Esophagus muscularis mucosa (tissue), 4 donors: ENCODE measurements at regions of chr15 and their contacts with region 1.

Region 1: DNA sequence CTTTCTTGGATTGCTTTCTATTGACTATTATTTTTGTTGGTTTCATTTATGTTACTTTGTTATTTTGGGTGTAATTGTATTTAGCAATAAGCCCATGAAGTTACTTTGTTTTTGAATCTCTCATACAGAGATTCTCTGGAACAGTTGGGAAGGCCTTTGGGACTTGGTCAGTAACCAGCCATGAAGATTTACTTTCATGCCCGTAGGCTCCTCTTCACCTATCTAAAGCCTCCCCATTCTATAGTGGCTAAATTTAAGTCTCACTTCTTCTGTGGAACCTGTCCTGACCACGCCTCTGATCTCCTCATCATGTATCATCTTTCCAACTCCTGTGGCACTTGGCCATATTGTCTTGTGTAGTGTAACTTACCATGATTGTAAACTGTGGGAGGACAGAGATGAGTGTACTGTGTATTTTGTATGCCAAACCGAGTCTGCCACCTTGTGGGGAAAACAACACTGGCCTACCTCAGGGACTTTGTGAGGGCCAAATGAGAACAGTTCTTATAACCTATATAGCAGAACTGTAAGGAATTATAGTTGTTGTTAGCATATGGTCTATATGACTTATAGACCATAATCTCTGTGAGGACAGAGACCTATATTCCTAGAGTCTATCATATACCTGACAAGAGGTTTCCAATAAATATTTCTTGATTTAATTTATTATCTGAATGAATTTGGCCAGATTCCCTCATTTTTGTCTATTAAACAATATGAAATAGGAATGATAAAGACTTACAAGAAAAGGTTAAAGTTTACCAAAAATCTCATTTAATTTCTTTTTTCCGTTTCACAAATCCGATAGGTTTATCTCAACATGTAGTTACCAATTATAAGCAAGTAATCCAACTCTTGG is 75.0 kb downstream of the STARD9 start:
- DNase-seq: no peak
- H3K4me3 ChIP-seq: no peak overlapping the region
- H3K27ac ChIP-seq: peak overlapping the region in 1 of 4 donors; percentile 42
- H3K4me1 ChIP-seq: peaks cover 0 to 9% (median 0%) of the 10 kb centered on the region in 4 donors
- H3K27me3 ChIP-seq: no peaks in the 10 kb centered on the region
- CTCF ChIP-seq: peak; percentile 65 to 86 (median 78)
- EP300 ChIP-seq: no peak
- POLR2A ChIP-seq: no peak

Region 2: DNA sequence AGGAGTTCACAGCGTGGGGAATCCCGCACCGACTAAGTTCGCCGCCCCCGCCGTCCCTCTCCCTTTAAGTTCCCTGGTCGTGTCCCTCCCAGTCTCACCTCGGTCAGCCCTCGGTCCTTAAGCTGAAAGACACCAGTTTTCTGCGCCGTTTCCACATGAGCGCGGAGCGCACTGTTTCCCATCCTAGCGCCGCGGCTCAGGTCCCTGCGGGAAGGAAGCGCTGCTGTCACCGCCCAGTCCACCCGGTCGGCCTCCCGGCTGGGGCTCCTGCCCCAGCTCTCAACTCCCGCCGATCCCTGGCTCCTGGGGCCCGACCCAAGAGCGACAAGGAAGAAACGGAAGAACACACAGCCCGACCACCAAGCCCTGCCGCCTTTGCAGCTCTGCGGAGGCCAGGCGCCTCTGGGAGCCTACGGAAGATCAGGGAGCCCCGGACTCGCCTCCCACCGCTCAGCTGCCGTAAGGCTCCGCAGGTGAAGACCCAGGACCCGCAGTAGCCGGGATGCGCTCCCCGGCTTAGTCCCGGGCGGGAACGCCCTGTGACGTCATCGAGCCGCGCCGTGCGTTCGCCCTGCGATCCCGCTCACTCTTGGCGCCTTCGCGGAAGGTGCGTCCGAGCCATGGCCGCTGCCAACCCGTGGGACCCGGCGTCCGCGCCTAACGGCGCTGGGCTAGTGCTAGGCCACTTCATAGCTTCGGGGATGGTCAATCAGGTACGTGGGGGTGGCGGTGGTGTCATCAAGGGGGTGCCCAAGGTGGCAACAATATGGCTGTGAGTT is 102.0 kb before region 1 on chr15 and contains the starts of genes HAUS2 and LRRC57:
- intact Hi-C with region 1: loop called (anchors 5 kb)
- DNase-seq: peak; percentile 95
- H3K4me3 ChIP-seq: peak within 1 kb of the TSS; percentile 80 to 93 (median 83)
- H3K27ac ChIP-seq: peak within 1 kb of the TSS; percentile 90 to 95 (median 92)
- H3K4me1 ChIP-seq: peaks cover 24 to 40% (median 40%) of the 10 kb centered on the region in 4 donors
- H3K27me3 ChIP-seq: no peaks in the 10 kb centered on the region
- CTCF ChIP-seq: peak in 1 of 3 experiments; percentile 6
- EP300 ChIP-seq: no peak
- POLR2A ChIP-seq: peak; percentile 69
- total RNA-seq, gene HAUS2: 13.2 to 28.2 (median 16.0) TPM
- total RNA-seq, gene LRRC57: 12.8 to 20.1 (median 17.3) TPM

Region 3: DNA sequence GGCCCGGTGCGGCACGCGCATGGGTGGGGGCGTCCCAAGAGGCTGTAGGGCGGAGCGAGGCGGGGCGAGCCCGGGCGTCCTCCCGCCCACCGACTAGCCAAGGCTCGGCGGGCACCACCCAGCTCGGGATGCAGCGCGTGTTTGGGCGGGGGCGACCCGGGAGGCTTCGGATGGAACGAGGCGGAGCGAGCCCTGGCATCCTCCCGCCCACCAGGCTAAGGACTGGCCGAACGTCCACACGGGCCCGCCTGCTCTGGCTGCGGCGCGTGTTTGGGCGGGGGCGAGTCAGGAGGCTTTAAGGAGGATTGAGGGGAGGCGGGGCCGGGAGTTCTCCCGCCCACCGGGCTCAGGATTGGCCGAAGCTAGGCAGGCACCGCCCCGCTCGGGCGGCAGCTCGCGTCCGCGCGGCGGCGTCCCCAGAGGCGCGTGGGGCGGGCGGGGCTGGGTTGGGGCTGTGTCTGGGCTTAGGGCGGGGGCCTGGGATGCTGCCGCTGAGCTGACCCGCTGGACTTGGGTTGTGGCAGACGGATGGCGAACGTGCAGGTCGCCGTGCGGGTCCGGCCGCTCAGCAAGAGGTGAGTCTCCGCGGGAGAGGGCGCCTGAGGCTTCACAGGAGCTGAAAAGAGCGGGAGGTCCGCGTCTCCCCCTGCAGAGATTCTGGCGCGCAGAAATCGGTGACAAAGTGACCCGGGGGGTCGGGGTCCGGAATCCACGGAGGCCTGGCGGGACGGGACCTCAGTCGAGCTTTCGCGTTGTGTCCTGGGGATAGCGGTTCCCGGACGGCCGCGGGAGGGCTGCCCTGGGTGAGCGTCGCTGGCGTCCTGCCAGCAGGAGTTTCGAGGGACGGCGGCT is 75.0 kb before region 1 on chr15 and contains the start of gene STARD9:
- intact Hi-C with region 1: no loop called
- DNase-seq: peak; percentile 99
- H3K4me3 ChIP-seq: peak within 1 kb of the TSS; percentile 84 to 98 (median 85)
- H3K27ac ChIP-seq: peak within 1 kb of the TSS; percentile 93 to 98 (median 96)
- H3K4me1 ChIP-seq: peaks cover 22 to 49% (median 47%) of the 10 kb centered on the region in 4 donors
- H3K27me3 ChIP-seq: no peaks in the 10 kb centered on the region
- CTCF ChIP-seq: peak in 1 of 3 experiments; percentile 13
- EP300 ChIP-seq: no peak
- POLR2A ChIP-seq: peak; percentile 36
- total RNA-seq, gene STARD9: 14.2 to 46.9 (median 33.3) TPM